PC-3 (cell line): ENCODE measurements at regions of chr18 and their contacts with region 1.

Region 1: DNA sequence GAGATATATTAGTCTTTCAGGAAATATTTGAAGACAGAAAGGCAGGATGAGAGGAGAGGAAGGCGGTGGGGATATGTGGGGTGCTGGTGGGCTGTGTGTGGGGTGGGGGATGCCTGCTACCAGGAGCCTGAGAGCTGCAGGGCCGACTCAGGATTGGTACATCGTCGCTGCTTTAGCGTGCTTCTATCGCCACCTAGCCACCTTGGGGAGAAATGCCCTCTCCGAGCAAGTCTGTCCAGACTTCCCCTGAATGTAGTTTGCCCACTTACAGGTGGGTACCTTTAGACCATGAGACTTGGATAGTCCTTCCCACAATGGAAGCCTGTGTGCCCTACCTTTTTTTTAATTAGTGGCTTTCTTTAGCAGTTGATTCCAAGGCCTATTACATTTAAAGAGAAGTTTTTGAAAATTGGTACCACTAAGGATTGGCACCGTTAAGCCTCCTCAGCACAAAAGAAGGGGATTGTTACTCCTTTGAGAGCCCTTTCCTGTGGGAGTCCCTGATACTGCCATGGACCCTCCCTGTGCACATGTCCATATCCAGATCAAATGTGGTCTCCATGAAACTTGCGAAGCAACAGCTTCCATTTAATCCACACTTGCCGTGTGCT is 114.1 kb upstream of the NDUFV2 start:
- DNase-seq: peak; percentile 81
- ATAC-seq: peak; percentile 95
- H3K4me3 ChIP-seq: no peak overlapping the region
- H3K27ac ChIP-seq: no peak overlapping the region
- H3K4me1 ChIP-seq: no peaks in the 10 kb centered on the region
- H3K27me3 ChIP-seq: no peaks in the 10 kb centered on the region
- CTCF ChIP-seq: peak; percentile 94

Region 2: DNA sequence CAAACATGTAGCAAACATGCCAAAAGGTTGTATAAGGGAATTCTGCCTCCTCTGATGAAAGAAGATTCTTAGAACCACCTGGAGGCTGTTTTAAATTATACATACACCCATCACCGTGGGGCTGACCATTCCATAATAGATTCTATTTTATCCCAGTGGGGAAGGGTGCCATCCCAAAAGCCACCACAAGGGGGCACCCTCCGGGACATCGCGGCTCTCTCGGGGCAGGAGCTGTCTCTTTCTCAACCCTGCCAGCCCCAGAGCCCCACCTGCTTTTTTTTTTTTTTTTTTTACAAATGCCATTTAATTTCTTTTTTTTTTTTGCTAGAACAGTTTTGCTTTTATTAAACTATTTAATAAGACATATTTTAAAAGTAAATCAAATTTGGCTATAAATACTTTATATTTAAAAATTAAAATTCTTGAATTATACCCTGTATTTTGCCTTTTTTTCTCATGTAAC is 291.6 kb before region 1 on chr18:
- CTCF ChIA-PET with region 1: interaction called, 9 read pairs
- POLR2A ChIA-PET with region 1: no interaction called
- intact Hi-C with region 1: loop called (anchors 1 kb)
- DNase-seq: peak; percentile 81
- ATAC-seq: peak; percentile 86
- H3K4me3 ChIP-seq: no peak overlapping the region
- H3K27ac ChIP-seq: no peak overlapping the region
- H3K4me1 ChIP-seq: peaks cover 10% of the 10 kb centered on the region
- H3K27me3 ChIP-seq: no peaks in the 10 kb centered on the region
- CTCF ChIP-seq: peak; percentile 88

Region 3: DNA sequence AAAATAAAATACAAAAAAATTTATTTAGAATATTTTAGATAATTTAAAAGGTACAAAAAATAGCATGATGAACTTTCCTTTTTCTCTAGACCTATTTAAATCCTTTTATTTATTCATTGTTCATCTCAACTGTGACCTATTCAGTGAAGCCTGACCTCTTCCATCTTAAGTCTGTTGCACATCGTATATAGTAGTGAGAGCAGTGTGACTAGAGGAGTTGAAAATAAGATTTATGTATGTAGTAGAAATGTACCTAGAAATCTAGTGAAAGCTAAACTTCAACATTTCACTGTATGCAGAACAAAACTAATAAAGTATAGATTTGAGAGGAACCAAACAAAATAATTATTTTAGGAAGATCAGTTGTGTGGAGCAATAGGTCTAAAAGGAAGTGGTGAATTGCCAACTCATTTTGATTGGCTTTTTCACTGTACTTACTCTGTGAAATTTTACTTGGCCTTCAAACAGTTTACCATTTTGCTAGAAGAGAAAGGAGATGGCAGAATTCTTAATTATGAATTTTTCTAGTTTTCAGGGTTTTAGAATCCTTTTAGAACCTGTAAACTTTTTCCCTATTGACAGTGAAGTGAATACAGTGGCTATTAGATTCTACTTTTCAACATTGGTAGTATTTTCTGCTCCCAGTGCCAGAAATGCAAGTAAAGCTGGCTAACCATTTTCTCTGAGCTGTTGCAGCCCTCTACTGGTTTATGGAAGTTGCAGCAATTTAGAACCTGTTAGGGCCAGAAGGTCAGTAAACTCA is 159.3 kb after region 1 on chr18:
- CTCF ChIA-PET with region 1: no interaction called
- POLR2A ChIA-PET with region 1: no interaction called
- intact Hi-C with region 1: loop called (anchors 5 kb)
- DNase-seq: peak; percentile 78
- ATAC-seq: peak; percentile 90
- H3K4me3 ChIP-seq: no peak overlapping the region
- H3K27ac ChIP-seq: peak overlapping the region; percentile 17
- H3K4me1 ChIP-seq: peaks cover 6% of the 10 kb centered on the region
- H3K27me3 ChIP-seq: no peaks in the 10 kb centered on the region
- CTCF ChIP-seq: peak; percentile 94